ENCODE measurements at regions of chr10 and their contacts with region 1.

Region 1: DNA sequence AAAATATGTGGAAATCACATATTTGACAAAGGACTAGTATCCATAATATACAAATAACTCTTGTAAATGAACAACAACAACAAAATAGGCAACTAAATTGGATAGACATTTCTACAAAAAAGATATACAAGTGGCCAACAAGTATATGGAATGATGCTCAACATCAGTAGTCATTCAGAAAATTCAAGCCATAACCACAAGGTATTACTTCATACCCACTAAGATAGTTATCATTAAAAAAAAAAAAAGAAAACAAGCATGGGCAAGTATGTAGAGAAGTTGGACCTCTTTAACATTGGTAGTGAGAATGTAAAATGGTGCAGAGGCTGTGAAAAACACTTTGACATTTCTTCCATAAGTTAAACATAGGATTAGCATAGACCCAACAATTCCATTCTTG is 80.8 kb downstream of the CYP26A1 start:
- DNase-seq: no peak
- H3K4me3 ChIP-seq: no peak overlapping the region
- H3K27ac ChIP-seq: no peak overlapping the region
- H3K4me1 ChIP-seq: no peaks in the 10 kb centered on the region
- H3K27me3 ChIP-seq: no peaks in the 10 kb centered on the region
- CTCF ChIP-seq: no peak
- POLR2A ChIP-seq: no peak

Region 2: GRCh38 chr10:93115661-93116383 is 38.7 kb before region 1 on chr10:
- intact Hi-C with region 1: no loop called
- DNase-seq: peak; percentile 29 to 58
- H3K4me3 ChIP-seq: no peak overlapping the region
- H3K27ac ChIP-seq: no peak overlapping the region
- H3K4me1 ChIP-seq: no peaks in the 10 kb centered on the region
- H3K27me3 ChIP-seq: no peaks in the 10 kb centered on the region
- CTCF ChIP-seq: peak in 2 of 3 donors; percentile 14 to 32
- POLR2A ChIP-seq: no peak

Region 3: DNA sequence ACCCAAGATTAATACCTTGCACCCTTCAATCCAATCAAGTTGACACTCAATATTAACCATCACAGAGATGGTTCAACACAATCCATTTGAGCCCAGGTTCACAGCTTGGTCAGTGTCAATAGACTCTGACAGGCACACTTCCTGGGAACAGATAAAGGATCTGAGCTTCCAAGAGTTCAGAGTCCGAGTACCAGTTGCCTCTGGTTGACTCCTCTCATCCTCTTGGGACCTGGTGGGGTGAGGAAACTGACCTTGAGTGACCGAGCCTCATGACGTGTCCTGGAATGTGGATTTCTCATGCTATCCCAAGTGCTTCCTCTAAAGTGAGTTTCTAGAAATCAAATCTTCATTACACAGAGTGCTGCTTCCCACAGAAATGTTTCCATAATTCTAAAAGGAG is 81.2 kb after region 1 on chr10:
- intact Hi-C with region 1: loop called (anchors 2 kb)
- DNase-seq: no peak
- H3K4me3 ChIP-seq: no peak overlapping the region
- H3K27ac ChIP-seq: no peak overlapping the region
- H3K4me1 ChIP-seq: no peaks in the 10 kb centered on the region
- H3K27me3 ChIP-seq: no peaks in the 10 kb centered on the region
- CTCF ChIP-seq: no peak
- POLR2A ChIP-seq: no peak

Region 4: GRCh38 chr10:93357680-93358079 is 203.1 kb after region 1 on chr10:
- intact Hi-C with region 1: no loop called
- DNase-seq: no peak
- H3K4me3 ChIP-seq: no peak overlapping the region
- H3K27ac ChIP-seq: no peak overlapping the region
- H3K4me1 ChIP-seq: no peaks in the 10 kb centered on the region
- H3K27me3 ChIP-seq: no peaks in the 10 kb centered on the region
- CTCF ChIP-seq: peak in 2 of 3 donors; percentile 25 to 29
- POLR2A ChIP-seq: no peak

Region 5: DNA sequence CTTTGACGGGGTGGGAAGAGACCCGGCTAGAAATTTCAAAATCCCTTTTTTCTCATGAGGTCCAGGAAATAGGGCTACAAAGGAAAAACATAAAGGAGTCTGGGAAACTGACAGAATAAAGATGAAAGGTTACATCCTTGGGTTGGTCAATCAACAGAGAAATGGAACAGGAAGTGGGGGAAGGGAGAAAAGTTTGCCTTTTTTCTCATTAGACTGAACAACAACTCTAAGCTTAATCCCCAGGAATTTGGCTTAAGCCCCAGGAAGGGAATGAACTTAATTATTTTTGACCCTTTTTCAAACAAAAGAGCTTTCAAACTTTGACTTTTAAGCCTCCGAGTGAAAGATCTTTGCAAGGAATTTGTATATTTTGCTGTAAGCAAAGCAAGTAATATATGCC is 635.9 kb after region 1 on chr10:
- intact Hi-C with region 1: no loop called
- DNase-seq: no peak
- H3K4me3 ChIP-seq: no peak overlapping the region
- H3K27ac ChIP-seq: no peak overlapping the region
- H3K4me1 ChIP-seq: no peaks in the 10 kb centered on the region
- H3K27me3 ChIP-seq: no peaks in the 10 kb centered on the region
- CTCF ChIP-seq: no peak
- POLR2A ChIP-seq: no peak

Measured in breast epithelium (tissue), 4 donors.